IMR-90 (cell line): ENCODE measurements at regions of chr4 and their contacts with region 1.

Region 1: GRCh38 chr4:78775303-78776030 is 683 bp upstream of the BMP2K start:
- DNase-seq: peak; percentile 80
- ATAC-seq: peak; percentile 79
- H3K4me3 ChIP-seq: peak overlapping the region; percentile 81
- H3K27ac ChIP-seq: peak overlapping the region; percentile 89
- H3K4me1 ChIP-seq: peaks cover 2% of the 10 kb centered on the region; the same call in 1 of the 2 replicates
- H3K27me3 ChIP-seq: no peaks in the 10 kb centered on the region
- CTCF ChIP-seq: no peak
- POLR2A ChIP-seq: no peak
- RAD21 ChIP-seq: 0 out of 2 replicates have a peak, but pooled peaks have one; percentile 5

Region 2: GRCh38 chr4:77911842-77912450 is 863.5 kb before region 1 on chr4:
- CTCF ChIA-PET with region 1: no interaction called
- POLR2A ChIA-PET with region 1: no interaction called
- dilution Hi-C with region 1: no loop called
- in situ Hi-C with region 1: no loop called
- intact Hi-C with region 1: no loop called
- DNase-seq: peak; percentile 37
- ATAC-seq: no peak
- H3K4me3 ChIP-seq: no peak overlapping the region
- H3K27ac ChIP-seq: no peak overlapping the region
- H3K4me1 ChIP-seq: no peaks in the 10 kb centered on the region
- H3K27me3 ChIP-seq: no peaks in the 10 kb centered on the region
- CTCF ChIP-seq: no peak
- POLR2A ChIP-seq: no peak
- RAD21 ChIP-seq: no peak

Region 3: DNA sequence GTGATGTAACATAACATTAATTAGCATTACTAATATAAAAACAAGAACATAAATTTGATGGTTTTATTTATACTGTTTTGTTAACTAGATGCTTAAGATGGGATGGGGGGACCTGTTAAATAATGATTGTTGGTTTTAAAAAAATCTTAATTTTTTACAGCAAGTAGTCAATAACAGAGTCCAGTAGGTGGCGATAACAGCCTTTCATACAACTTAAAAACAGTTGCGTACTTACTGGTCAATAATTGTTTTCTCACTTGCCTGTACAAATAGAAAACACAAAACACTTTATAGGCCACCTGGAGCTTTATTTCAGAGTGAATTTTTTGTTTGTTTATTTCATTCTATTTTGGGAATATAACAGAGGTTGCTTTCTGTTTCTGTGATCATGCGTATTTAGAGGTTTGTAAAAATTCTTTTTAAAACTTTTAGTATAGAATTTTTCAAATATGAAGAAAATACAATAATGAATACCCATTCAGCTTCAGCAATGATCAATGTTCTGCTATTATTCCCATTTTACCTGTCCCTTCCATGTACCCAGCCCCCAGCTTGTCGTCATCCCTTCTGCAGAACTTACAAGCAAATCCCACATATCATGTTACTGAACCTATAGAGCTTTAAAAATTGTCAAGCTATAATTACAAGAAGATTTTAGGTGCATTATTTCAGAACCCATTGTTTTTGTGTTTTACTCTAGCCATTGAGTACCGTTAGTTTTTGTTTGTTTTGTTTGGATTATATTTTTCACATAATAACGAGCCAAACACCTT is 815.7 kb before region 1 on chr4:
- CTCF ChIA-PET with region 1: no interaction called
- POLR2A ChIA-PET with region 1: no interaction called
- dilution Hi-C with region 1: no loop called
- in situ Hi-C with region 1: no loop called
- intact Hi-C with region 1: loop called (anchors 10 kb)
- DNase-seq: peak; percentile 57
- ATAC-seq: peak; percentile 61; the same call in 1 of the 2 replicates
- H3K4me3 ChIP-seq: no peak overlapping the region
- H3K27ac ChIP-seq: no peak overlapping the region
- H3K4me1 ChIP-seq: no peaks in the 10 kb centered on the region
- H3K27me3 ChIP-seq: no peaks in the 10 kb centered on the region
- CTCF ChIP-seq: peak; percentile 70
- POLR2A ChIP-seq: no peak
- RAD21 ChIP-seq: peak; percentile 70

Region 4: GRCh38 chr4:78396613-78397291 is 378.7 kb before region 1 on chr4:
- CTCF ChIA-PET with region 1: no interaction called
- POLR2A ChIA-PET with region 1: no interaction called
- dilution Hi-C with region 1: no loop called
- in situ Hi-C with region 1: no loop called
- intact Hi-C with region 1: no loop called
- DNase-seq: no peak
- ATAC-seq: no peak
- H3K4me3 ChIP-seq: no peak overlapping the region
- H3K27ac ChIP-seq: no peak overlapping the region
- H3K4me1 ChIP-seq: no peaks in the 10 kb centered on the region
- H3K27me3 ChIP-seq: 0 out of 2 replicates have a peak, but pooled peaks cover 2% of the 10 kb centered on the region
- CTCF ChIP-seq: no peak
- POLR2A ChIP-seq: no peak
- RAD21 ChIP-seq: no peak

Region 5: GRCh38 chr4:78644744-78645330 is 130.6 kb before region 1 on chr4:
- CTCF ChIA-PET with region 1: interaction called, 3 read pairs
- POLR2A ChIA-PET with region 1: no interaction called
- dilution Hi-C with region 1: no loop called
- in situ Hi-C with region 1: loop called (anchors 10 kb)
- intact Hi-C with region 1: loop called (anchors 1 kb)
- DNase-seq: peak; percentile 86
- ATAC-seq: peak; percentile 74
- H3K4me3 ChIP-seq: no peak overlapping the region
- H3K27ac ChIP-seq: peak overlapping the region; percentile 99; the same call in 1 of the 2 replicates
- H3K4me1 ChIP-seq: peaks cover 6% of the 10 kb centered on the region
- H3K27me3 ChIP-seq: no peaks in the 10 kb centered on the region
- CTCF ChIP-seq: peak; percentile 87
- POLR2A ChIP-seq: no peak
- RAD21 ChIP-seq: peak; percentile 74

Region 6: GRCh38 chr4:78667325-78667724 is 108.1 kb before region 1 on chr4:
- CTCF ChIA-PET with region 1: no interaction called
- POLR2A ChIA-PET with region 1: interaction called, 29 read pairs
- dilution Hi-C with region 1: no loop called
- in situ Hi-C with region 1: no loop called
- intact Hi-C with region 1: no loop called
- DNase-seq: no peak
- ATAC-seq: no peak
- H3K4me3 ChIP-seq: no peak overlapping the region
- H3K27ac ChIP-seq: no peak overlapping the region
- H3K4me1 ChIP-seq: peaks cover 2% of the 10 kb centered on the region
- H3K27me3 ChIP-seq: no peaks in the 10 kb centered on the region
- CTCF ChIP-seq: no peak
- POLR2A ChIP-seq: no peak
- RAD21 ChIP-seq: no peak

Region 7: GRCh38 chr4:78796526-78796925 is 21.1 kb after region 1 on chr4:
- CTCF ChIA-PET with region 1: no interaction called
- POLR2A ChIA-PET with region 1: no interaction called
- dilution Hi-C with region 1: no loop called
- in situ Hi-C with region 1: no loop called
- intact Hi-C with region 1: no loop called
- DNase-seq: no peak
- ATAC-seq: no peak
- H3K4me3 ChIP-seq: no peak overlapping the region
- H3K27ac ChIP-seq: no peak overlapping the region
- H3K4me1 ChIP-seq: 0 out of 2 replicates have a peak, but pooled peaks cover 2% of the 10 kb centered on the region
- H3K27me3 ChIP-seq: no peaks in the 10 kb centered on the region
- CTCF ChIP-seq: no peak
- POLR2A ChIP-seq: no peak
- RAD21 ChIP-seq: no peak

Region 8: DNA sequence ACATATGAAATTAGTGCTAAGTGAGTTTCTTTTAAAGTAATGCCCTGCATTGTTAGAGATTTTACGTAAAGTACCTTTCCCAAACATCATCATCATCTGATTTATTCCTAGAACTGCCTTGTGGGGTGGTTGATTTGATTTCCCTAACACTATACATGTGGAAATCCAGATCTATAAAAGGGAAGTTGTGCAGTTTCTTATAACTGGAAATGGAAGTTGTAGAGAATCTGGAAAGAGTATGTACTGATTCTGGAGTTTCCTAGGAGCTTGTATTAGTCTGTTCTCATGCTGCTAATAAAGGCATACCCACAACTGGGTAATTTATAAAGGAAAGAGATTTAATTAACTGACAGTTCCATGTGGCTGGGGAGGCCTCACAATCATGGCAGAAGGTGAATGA is 48.5 kb after region 1 on chr4:
- CTCF ChIA-PET with region 1: no interaction called
- POLR2A ChIA-PET with region 1: no interaction called
- dilution Hi-C with region 1: no loop called
- in situ Hi-C with region 1: no loop called
- intact Hi-C with region 1: no loop called
- DNase-seq: no peak
- ATAC-seq: no peak
- H3K4me3 ChIP-seq: no peak overlapping the region
- H3K27ac ChIP-seq: no peak overlapping the region
- H3K4me1 ChIP-seq: peaks cover 2% of the 10 kb centered on the region; the same call in 1 of the 2 replicates
- H3K27me3 ChIP-seq: no peaks in the 10 kb centered on the region
- CTCF ChIP-seq: no peak
- POLR2A ChIP-seq: no peak
- RAD21 ChIP-seq: no peak

Region 9: GRCh38 chr4:78864405-78865024 is 89.0 kb after region 1 on chr4:
- CTCF ChIA-PET with region 1: interaction called, 7 read pairs
- POLR2A ChIA-PET with region 1: interaction called, 7 read pairs
- dilution Hi-C with region 1: no loop called
- in situ Hi-C with region 1: no loop called
- intact Hi-C with region 1: loop called (anchors 1 kb)
- DNase-seq: peak; percentile 85
- ATAC-seq: peak; percentile 66
- H3K4me3 ChIP-seq: no peak overlapping the region
- H3K27ac ChIP-seq: no peak overlapping the region
- H3K4me1 ChIP-seq: no peaks in the 10 kb centered on the region
- H3K27me3 ChIP-seq: no peaks in the 10 kb centered on the region
- CTCF ChIP-seq: peak; percentile 83
- POLR2A ChIP-seq: no peak
- RAD21 ChIP-seq: peak; percentile 87